A549 (cell line): ENCODE measurements at regions of chr11 and their contacts with region 1.

Region 1: GRCh38 chr11:2002807-2003206 is 5.2 kb upstream of the H19 start:
- DNase-seq: no peak
- ATAC-seq: peak; percentile 49 to 72; a peak in 4 of 6 replicates
- H3K4me3 ChIP-seq: no peak overlapping the region
- H3K27ac ChIP-seq: no peak overlapping the region
- H3K4me1 ChIP-seq: no peaks in the 10 kb centered on the region
- CTCF ChIP-seq: no peak
- EP300 ChIP-seq: no peak
- POLR2A ChIP-seq: no peak
- RAD21 ChIP-seq: no peak

Region 2: DNA sequence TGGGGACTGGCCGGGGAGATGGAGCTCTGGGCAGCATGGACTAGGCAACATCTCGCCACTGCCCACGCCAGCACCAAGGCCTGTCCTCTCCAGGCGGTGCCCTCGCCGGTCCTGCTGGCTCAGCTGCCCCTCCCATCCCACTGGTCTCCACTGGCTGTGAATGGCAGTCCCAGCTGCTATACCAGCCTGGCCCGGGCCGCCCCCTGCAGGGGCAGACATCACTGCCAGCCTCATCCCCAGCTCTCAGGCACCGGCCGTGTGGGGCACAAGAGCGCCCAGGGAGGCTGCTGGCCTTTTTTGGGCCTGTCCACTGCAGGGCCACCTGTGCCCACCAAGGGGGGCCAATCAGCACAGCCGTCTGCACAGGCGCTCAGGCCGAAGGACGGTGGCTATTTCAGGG is 24.9 kb after region 1 on chr11:
- CTCF ChIA-PET with region 1: interaction called, 10 read pairs
- POLR2A ChIA-PET with region 1: no interaction called
- DNase-seq: no peak
- ATAC-seq: peak in 1 of 2 experiments; percentile 41; a peak in 2 of 6 replicates
- H3K4me3 ChIP-seq: no peak overlapping the region
- H3K27ac ChIP-seq: no peak overlapping the region
- H3K4me1 ChIP-seq: no peaks in the 10 kb centered on the region
- CTCF ChIP-seq: no peak
- EP300 ChIP-seq: no peak
- POLR2A ChIP-seq: no peak
- RAD21 ChIP-seq: no peak